A549 (cell line): ENCODE measurements at regions of chr17 and their contacts with region 1.

Region 1: GRCh38 chr17:37744961-37745800 is at the start of gene HNF1B:
- DNase-seq: peak; percentile 68 to 76
- ATAC-seq: peak; percentile 40 to 50
- H3K4me3 ChIP-seq: peak within 1 kb of the TSS; percentile 67
- H3K27ac ChIP-seq: peak within 1 kb of the TSS; percentile 81 to 94
- H3K4me1 ChIP-seq: peaks cover 23% of the 10 kb centered on the region
- CTCF ChIP-seq: peak; percentile 48
- EP300 ChIP-seq: no peak
- POLR2A ChIP-seq: peak; percentile 60
- RAD21 ChIP-seq: peak; percentile 55 to 59; a peak in 4 of 5 replicates
- polyA plus RNA-seq, gene HNF1B: 13.3 and 17.0 TPM in 2 replicates

Region 2: GRCh38 chr17:37592291-37592690 is 152.9 kb before region 1 on chr17:
- CTCF ChIA-PET with region 1: no interaction called
- POLR2A ChIA-PET with region 1: no interaction called
- DNase-seq: no peak
- ATAC-seq: no peak
- H3K4me3 ChIP-seq: no peak overlapping the region
- H3K27ac ChIP-seq: no peak overlapping the region
- H3K4me1 ChIP-seq: peaks cover 14% of the 10 kb centered on the region
- CTCF ChIP-seq: no peak
- EP300 ChIP-seq: no peak
- POLR2A ChIP-seq: no peak
- RAD21 ChIP-seq: no peak

Region 3: GRCh38 chr17:37661400-37662014 is 83.7 kb before region 1 on chr17:
- CTCF ChIA-PET with region 1: interaction called, 6 read pairs
- POLR2A ChIA-PET with region 1: interaction called, 11 read pairs
- DNase-seq: peak; percentile 30 to 45
- ATAC-seq: peak; percentile 70 to 71
- H3K4me3 ChIP-seq: no peak overlapping the region
- H3K27ac ChIP-seq: no peak overlapping the region
- H3K4me1 ChIP-seq: no peaks in the 10 kb centered on the region
- CTCF ChIP-seq: no peak; the same call in 2 of the 3 replicates
- EP300 ChIP-seq: no peak
- POLR2A ChIP-seq: no peak
- RAD21 ChIP-seq: no peak

Region 4: DNA sequence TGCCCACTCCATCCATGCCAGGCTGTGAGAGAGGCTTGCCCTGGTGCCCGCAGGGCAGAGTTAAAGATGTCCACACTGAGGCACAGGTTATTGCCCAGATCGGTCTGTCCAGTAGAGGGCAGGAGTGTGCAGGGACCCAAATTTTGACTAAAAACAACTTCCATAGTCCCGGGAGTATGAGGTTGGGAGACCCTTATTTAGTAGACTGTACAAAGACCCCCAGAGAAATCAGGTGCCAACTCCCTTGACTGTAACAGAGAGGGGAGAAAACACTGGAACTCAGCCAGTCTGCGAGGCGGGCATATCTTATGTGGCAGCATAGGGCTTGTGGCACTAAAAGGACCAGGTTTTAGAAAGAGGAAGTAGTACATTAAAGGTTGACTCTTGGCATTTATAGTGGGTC is 43.7 kb before region 1 on chr17:
- CTCF ChIA-PET with region 1: interaction called, 19 read pairs
- POLR2A ChIA-PET with region 1: no interaction called
- DNase-seq: peak; percentile 50 to 75
- ATAC-seq: peak; percentile 67 to 84; a peak in 5 of 6 replicates
- H3K4me3 ChIP-seq: no peak overlapping the region
- H3K27ac ChIP-seq: peak overlapping the region; percentile 72 to 78
- H3K4me1 ChIP-seq: peaks cover 48% of the 10 kb centered on the region
- CTCF ChIP-seq: peak; percentile 94
- EP300 ChIP-seq: no peak
- POLR2A ChIP-seq: no peak
- RAD21 ChIP-seq: peak; percentile 82 to 85

Region 5: DNA sequence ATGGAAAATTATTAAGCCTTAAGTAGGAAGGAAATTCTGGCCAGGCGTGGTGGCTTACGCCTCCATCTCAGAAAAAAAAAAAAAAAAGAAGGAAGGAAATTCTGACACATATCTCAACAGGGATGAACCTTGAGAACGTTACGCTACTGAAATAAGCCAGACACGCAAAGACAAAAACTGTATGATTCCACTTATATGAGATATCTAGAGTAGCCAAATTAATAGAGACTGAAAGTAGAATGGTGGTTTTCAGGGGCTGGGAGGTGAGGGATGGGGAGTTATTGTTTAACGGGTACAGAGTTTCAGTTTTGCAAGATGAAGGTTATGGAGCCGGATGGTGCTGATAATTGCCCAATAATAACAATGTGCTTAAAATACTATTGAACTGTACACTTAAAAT is 15.9 kb after region 1 on chr17:
- CTCF ChIA-PET with region 1: interaction called, 26 read pairs
- POLR2A ChIA-PET with region 1: interaction called, 10 read pairs
- DNase-seq: no peak
- ATAC-seq: no peak
- H3K4me3 ChIP-seq: no peak overlapping the region
- H3K27ac ChIP-seq: no peak overlapping the region
- H3K4me1 ChIP-seq: peaks cover 24% of the 10 kb centered on the region
- CTCF ChIP-seq: no peak
- EP300 ChIP-seq: no peak
- POLR2A ChIP-seq: no peak
- RAD21 ChIP-seq: no peak

Region 6: GRCh38 chr17:37844158-37844976 is 99.2 kb after region 1 on chr17:
- CTCF ChIA-PET with region 1: interaction called, 11 read pairs
- POLR2A ChIA-PET with region 1: interaction called, 4 read pairs
- DNase-seq: peak; percentile 71 to 87
- ATAC-seq: peak; percentile 96 to 99
- H3K4me3 ChIP-seq: no peak overlapping the region
- H3K27ac ChIP-seq: peak overlapping the region in 1 of 2 experiments; percentile 24; a peak in 3 of 6 replicates
- H3K4me1 ChIP-seq: peaks cover 16% of the 10 kb centered on the region; the same call in 2 of the 3 replicates
- CTCF ChIP-seq: peak; percentile 82
- EP300 ChIP-seq: no peak
- POLR2A ChIP-seq: no peak
- RAD21 ChIP-seq: peak; percentile 90 to 93